GM10248 (cell line): ENCODE measurements at regions of chr10 and their contacts with region 1.

Region 1: DNA sequence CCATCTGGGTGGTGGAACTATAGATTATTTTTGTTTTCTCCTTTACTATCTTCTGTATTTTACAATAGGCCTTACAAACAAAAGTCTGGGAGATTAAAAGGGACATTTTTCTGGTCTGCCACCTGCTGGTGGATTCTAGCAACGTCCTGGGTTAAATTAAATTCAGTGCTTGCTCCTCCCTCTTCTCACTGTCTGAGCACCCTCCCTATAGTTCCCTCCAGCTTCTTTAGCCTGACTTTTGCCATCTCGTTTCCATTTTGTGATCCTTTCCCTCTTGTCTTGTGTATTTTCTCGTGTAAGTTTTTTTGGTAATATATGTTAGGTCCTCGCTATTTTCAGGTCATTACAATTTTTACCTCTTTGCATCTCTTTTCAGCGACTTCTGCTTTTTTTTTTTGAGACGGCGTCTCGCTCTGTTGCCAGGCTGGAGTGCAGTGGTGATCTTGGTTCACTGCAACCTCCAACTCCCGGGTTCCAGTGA is 16.1 kb downstream of the ANKRD16 start:
- DNase-seq: peak; percentile 85
- CTCF ChIP-seq: peak; percentile 65

Region 2: DNA sequence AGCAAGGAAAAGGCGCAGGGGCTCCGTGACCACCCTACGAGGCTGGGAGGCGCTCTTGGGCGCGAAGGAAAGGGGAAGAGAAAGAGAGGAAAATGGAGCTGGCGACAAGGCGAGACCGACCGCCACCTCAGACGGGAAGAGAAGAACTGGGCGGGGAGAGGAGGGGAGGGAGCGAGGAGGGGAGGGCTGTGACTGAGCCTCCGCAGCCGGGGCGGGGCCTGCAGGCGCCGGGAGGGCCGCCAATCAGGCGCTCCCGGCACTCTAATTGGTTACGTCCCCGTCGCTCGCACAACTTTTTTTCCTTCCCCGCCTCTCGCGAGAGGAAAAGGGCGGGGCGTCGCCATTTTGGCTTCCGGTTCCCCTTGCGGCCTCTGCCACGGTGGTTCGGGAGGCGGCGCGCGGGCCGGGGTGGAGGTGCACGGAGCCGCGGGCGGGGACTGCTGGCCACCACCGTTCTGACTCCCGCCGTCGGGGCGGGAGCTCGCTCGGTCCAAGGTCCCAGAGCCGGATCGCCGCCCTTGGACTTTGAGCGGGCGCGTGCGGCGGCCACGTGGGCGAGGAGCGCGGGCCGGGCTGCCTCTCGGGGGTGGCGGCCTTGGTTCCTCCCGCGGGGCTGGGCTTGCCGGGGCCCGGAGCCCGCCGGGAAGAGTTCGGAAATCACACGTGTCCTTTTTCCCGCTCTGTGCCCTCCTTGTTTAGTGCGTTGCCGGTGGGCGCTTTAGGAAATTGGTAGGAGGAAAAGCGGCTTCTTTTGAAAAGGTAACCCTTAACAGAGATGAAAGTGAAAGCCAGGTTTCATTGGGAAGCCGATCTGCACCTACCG is 60.1 kb before region 1 on chr10 and contains the start of gene GDI2:
- CTCF ChIA-PET with region 1: interaction called, 18 read pairs
- POLR2A ChIA-PET with region 1: interaction called, 3 read pairs
- DNase-seq: peak; percentile 98
- CTCF ChIP-seq: no peak

Region 3: DNA sequence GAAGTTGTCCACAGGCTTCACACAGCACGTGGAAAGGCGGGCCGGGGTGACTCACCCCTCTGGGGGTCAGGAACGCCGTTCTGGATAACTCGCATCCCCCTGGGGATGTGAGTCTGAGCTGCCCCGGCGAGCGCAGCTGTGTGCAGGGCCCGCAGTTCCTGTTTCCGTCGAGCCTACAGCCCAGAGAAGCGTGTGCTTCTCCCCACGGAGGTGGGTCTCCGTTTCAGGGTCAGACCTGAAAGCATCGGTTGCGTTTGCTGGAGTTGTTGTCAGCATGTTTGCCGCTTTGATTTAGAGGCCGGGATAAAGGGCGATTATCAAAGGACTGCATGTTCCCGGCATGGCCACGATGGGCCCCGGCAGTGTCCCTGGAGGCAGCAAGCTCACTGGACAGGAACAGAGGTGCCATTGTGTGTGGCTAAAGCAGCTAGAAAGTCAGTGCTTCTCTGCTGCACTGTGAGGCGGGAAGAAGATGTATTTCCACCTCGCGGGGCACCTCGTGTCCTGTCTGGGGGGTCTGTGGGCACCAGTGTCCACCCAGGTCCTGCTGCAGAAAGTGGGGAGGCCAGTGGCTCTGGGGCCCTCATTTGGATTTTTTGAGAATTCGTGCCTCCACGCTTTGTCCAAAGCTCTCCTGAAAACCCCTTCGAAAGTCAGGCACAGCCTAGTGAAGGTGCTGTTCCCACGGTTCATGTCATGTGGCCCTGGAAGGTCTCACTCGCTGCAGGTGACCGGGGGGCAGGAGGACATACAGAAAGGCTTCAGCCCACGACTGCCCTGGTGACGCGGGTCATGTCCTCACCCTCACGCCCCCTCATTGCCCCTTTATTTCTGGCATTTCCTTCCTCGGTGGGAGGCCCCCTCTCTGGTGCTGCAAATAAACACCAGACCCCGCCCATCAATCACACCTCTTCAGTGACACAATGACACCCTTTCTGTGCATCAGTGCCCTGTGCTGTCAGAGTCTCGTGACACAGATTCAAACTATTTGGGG is 32.9 kb before region 1 on chr10:
- CTCF ChIA-PET with region 1: interaction called, 19 read pairs
- POLR2A ChIA-PET with region 1: interaction called, 3 read pairs
- DNase-seq: peak; percentile 83
- CTCF ChIP-seq: no peak

Region 4: DNA sequence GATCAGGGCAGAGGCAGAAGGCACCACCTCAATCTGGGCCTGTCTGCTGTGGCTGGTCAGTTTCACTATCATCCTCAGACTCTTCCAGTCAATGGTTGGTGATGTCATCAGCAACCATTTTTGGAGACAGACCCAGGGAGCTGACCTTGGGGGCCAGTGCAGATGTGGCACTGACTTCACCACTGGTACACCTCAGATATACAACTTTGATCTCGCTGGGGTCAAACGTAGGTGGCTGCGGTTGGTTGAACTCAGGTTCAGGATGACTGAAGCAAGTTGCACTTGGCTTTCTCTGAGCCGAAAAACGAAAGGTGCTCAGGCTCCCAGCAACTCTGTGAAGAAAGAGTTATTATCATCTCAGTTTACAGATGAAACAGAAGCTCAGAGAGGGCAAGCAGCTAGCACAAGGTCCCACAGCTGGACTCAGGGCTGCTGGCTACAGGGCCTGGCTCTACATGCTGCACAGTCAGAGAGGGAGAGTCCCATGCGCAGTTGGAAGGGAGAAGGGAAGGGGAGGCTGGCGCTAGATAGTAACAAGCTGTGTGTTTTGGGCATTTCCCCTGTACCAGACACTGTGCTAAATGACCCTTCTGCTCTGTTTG is 11.1 kb before region 1 on chr10:
- CTCF ChIA-PET with region 1: interaction called, 35 read pairs
- POLR2A ChIA-PET with region 1: interaction called, 4 read pairs
- DNase-seq: peak; percentile 86
- CTCF ChIP-seq: no peak

Region 5: DNA sequence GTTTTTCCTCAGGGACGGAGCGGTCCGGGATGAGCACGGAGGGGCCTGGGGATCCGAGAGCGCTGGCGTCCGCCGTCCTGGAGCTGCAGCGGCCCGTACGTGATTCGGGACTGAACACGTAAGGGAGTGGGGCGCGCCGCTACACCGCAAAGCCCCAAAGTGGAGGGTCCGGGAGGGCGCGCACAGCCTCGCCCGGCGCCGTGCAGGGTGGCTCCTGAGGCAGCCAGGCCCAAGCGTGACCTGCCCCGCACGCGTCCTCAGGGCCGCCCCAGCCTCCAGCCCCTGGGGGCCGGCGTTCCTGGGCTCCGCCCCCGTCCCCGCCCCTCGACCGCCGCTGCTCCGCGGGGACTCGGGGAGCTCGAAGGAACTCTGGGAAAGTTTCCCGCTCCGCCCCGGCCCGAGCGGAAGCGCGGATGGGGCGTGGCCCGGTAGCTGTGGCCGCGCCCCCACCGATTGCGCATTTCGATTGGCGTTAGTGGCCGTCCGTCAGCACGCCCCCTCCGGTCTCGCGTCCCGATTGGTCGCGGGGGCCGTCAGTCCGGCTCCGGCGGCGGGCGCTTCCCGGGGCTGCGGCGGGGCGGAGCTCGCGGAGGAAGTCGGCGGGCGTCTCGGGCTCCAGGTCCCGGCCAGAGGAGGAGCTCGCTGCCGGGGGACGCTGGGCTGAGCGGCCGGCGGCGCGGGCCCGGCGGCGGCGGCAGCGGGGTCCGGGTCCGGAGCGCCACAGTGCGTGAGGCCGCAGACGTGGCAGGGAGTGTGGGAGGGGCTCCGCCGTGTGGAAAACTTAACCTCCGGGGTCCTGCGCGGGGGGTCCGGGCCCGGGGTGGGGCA is 16.3 kb after region 1 on chr10 and contains the starts of genes ANKRD16 and FBH1:
- CTCF ChIA-PET with region 1: interaction called, 51 read pairs
- POLR2A ChIA-PET with region 1: no interaction called
- DNase-seq: peak; percentile 98
- CTCF ChIP-seq: no peak